ENCODE measurements at regions of chr15 and their contacts with region 1.

Region 1: DNA sequence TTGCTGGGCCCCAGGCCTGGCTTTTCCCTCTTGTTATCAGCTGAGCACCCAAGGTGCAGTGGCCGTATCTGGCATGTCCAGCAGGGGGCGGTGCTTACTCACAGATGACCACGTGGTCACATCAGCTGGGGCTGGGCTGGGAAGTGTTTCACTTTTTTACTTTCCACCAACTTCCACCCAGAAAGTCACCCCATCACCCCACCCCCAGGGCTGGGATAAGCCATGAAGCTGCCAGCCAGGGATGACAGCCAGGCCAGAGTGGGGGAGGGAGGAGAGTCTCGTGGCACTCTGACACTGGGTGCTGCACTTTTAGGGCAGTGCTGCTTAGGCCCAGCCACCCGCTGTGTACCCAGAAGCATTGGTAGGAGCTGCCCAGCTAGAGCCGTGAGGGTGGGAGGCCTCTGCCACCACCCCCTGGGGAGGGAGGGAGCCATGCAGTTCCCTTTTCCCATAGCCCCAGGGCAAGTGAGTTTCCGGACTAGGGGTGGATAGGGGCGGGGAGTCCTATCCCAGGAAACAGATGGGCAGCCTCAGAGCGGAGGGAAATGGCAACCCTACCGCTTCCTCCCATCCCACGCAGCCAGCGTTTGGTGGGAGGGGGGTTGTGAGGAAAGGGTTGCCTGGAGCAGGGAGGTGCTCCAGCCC is 6.1 kb downstream of the PPCDC start:
- DNase-seq: peak; percentile 89 to 92
- H3K4me3 ChIP-seq: peak overlapping the region; percentile 13 to 56 (median 20)
- H3K27ac ChIP-seq: peak overlapping the region; percentile 70 to 89
- H3K4me1 ChIP-seq: peaks cover 0 to 17% of the 10 kb centered on the region in 2 donors
- H3K27me3 ChIP-seq: no peaks in the 10 kb centered on the region
- CTCF ChIP-seq: peak; percentile 96 to 98 (median 97)
- POLR2A ChIP-seq: no peak

Region 2: DNA sequence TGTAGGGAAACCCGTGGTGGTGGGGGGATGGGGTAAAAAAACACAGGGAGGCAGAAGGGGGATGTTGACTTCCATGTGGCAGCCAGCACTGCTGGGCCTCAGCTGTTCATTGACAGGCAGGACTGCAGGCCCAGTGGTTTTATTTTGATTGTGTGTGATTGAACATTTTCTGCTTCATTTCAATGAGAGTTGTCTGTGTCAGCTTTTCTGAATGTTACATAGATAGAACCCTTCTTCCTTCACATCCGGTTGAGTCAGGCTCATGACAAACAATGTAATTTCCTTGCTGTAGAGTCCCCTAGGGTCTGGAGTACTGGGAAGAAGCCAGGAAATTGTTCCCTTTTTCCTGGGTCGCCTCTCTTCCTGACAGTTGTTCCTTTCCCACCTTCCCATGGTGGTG is 64.7 kb before region 1 on chr15:
- intact Hi-C with region 1: loop called (anchors 2 kb)
- DNase-seq: no peak
- H3K4me3 ChIP-seq: no peak overlapping the region
- H3K27ac ChIP-seq: peak overlapping the region in 1 of 2 donors; percentile 32
- H3K4me1 ChIP-seq: no peaks in the 10 kb centered on the region
- H3K27me3 ChIP-seq: no peaks in the 10 kb centered on the region
- CTCF ChIP-seq: no peak
- POLR2A ChIP-seq: no peak

Region 3: GRCh38 chr15:75201609-75202250 is 172.2 kb after region 1 on chr15 and contains the start of gene C15orf39:
- intact Hi-C with region 1: loop called (anchors 5 kb)
- DNase-seq: peak; percentile 57 to 63
- H3K4me3 ChIP-seq: peak within 1 kb of the TSS; percentile 92 to 98 (median 93)
- H3K27ac ChIP-seq: peak within 1 kb of the TSS; percentile 96
- H3K4me1 ChIP-seq: peaks cover 4 to 25% of the 10 kb centered on the region in 2 donors
- H3K27me3 ChIP-seq: no peaks in the 10 kb centered on the region
- CTCF ChIP-seq: peak; percentile 51 to 96 (median 72)
- POLR2A ChIP-seq: peak; percentile 82
- total RNA-seq, gene C15orf39: 7.7 to 17.4 (median 11.5) TPM

Measured in breast epithelium (tissue), 4 donors.